PC-9 (cell line): ENCODE measurements at regions of chrX and their contacts with region 1.

Region 1: GRCh38 chrX:100745798-100746537 is 14.0 kb upstream of the SYTL4 start:
- DNase-seq: peak in 1 of 2 experiments; percentile 11
- H3K4me3 ChIP-seq: no peak overlapping the region
- H3K27ac ChIP-seq: no peak overlapping the region
- H3K4me1 ChIP-seq: peaks cover 29% of the 10 kb centered on the region
- H3K27me3 ChIP-seq: no peaks in the 10 kb centered on the region
- CTCF ChIP-seq: no peak

Region 2: DNA sequence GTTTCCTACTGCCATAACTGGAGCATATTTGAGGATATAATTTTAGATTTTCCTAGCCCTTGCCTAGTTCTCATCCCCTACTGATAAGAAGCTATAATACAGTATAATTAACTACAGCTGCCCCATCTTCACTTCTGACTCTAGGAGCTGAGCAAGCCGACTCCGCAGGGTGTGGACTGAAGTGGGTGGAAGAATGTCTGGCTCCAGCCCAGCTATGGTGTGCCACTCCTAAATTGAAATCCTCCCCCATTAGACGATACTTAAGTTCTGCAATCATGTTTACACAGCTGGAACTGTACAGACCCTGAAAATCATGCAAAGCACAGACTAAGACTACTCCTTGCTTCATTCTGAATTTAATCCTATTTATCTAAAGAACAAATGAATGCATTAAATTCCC is 429.0 kb before region 1 on chrX:
- CTCF ChIA-PET with region 1: no interaction called
- POLR2A ChIA-PET with region 1: no interaction called
- intact Hi-C with region 1: no loop called
- DNase-seq: no peak
- H3K4me3 ChIP-seq: no peak overlapping the region
- H3K27ac ChIP-seq: no peak overlapping the region
- H3K4me1 ChIP-seq: no peaks in the 10 kb centered on the region
- H3K27me3 ChIP-seq: no peaks in the 10 kb centered on the region
- CTCF ChIP-seq: no peak

Region 3: DNA sequence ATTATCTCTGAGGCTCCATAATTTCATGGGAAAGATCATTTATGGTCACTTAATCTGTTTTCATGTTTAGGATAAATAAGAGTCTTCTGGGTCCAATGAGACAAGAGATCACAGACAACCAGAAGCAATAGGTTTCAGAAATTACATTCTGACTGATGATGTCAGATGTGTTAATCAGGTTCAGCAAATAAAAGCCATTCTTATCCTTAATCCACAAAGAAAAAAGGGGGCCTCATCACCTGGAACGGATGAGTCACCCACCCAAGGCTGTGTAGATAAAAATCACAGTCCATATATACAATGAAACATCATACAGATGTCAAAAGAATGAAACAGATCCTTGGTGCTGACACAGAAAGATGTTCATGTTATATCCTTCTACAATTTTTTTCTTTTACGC is 50.7 kb before region 1 on chrX:
- CTCF ChIA-PET with region 1: no interaction called
- POLR2A ChIA-PET with region 1: no interaction called
- intact Hi-C with region 1: loop called (anchors 5 kb)
- DNase-seq: peak in 1 of 2 experiments; percentile 51
- H3K4me3 ChIP-seq: no peak overlapping the region
- H3K27ac ChIP-seq: 0 out of 2 replicates have a peak overlapping the region, but pooled peaks have one; percentile 26
- H3K4me1 ChIP-seq: peaks cover 28% of the 10 kb centered on the region
- H3K27me3 ChIP-seq: no peaks in the 10 kb centered on the region
- CTCF ChIP-seq: no peak

Region 4: GRCh38 chrX:100731441-100732281 is 14.3 kb before region 1 on chrX and contains the start of gene SYTL4:
- CTCF ChIA-PET with region 1: no interaction called
- POLR2A ChIA-PET with region 1: interaction called, 7 read pairs
- intact Hi-C with region 1: loop called (anchors 2 kb)
- DNase-seq: peak in 1 of 2 experiments; percentile 52
- H3K4me3 ChIP-seq: peak within 1 kb of the TSS; percentile 77
- H3K27ac ChIP-seq: no peak within 1 kb of the TSS
- H3K4me1 ChIP-seq: no peaks in the 10 kb centered on the region
- H3K27me3 ChIP-seq: no peaks in the 10 kb centered on the region
- CTCF ChIP-seq: no peak
- total RNA-seq, gene SYTL4: 23.4 and 23.6 TPM in 2 replicates